GM10248 (cell line): ENCODE measurements at regions of chr1 and their contacts with region 1.

Region 1: DNA sequence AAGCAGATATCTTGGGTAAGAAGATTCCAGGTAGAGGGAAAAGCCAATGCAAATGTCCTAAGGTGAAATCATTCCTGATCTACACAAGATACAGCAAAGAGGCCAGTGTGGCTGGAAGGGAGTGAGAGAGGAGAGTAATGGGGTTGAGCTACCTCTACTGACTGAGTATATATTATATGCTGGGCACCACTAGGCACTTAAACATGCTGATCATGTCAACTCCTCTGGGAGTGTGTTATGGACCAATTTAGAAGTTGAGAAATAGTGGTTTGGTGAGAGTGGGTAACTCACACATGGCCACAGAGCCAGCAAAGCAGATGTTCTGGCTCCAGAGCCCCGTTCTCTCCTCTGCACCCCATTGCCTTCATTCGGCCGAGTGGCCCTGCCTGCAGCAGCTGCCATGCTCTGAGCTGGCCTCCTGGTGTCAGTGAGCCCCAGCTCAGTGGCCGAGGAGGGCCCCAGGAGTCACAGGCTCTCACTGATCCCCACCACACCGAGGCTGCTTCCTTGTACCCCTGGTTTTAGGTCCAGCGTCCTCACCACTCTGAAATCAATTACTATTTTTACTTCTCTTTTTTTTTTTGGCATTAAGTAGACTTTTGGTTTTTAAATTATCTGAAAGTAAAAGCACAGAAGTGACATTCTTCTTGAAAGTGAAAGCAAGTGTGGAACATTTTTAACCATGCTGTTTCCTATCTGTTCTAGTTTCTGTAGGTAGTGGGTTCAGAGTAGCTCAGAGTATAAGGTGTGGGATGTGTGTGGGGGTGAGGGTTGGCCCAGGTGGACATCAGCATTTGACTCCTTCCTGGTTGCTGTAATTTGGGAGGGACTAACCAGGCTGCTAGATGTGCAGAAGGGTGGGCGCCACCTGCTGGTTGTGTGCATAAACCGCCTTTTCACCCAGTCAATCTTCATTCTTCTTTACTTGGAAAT is 45.8 kb upstream of the CRNN start:
- DNase-seq: peak; percentile 81
- CTCF ChIP-seq: peak; percentile 71

Region 2: GRCh38 chr1:152039886-152040285 is 420.0 kb before region 1 on chr1:
- CTCF ChIA-PET with region 1: interaction called, 14 read pairs
- POLR2A ChIA-PET with region 1: no interaction called
- DNase-seq: no peak
- CTCF ChIP-seq: no peak

Region 3: GRCh38 chr1:152182431-152182830 is 277.4 kb before region 1 on chr1:
- CTCF ChIA-PET with region 1: interaction called, 159 read pairs
- POLR2A ChIA-PET with region 1: no interaction called
- DNase-seq: no peak
- CTCF ChIP-seq: peak; percentile 46

Region 4: DNA sequence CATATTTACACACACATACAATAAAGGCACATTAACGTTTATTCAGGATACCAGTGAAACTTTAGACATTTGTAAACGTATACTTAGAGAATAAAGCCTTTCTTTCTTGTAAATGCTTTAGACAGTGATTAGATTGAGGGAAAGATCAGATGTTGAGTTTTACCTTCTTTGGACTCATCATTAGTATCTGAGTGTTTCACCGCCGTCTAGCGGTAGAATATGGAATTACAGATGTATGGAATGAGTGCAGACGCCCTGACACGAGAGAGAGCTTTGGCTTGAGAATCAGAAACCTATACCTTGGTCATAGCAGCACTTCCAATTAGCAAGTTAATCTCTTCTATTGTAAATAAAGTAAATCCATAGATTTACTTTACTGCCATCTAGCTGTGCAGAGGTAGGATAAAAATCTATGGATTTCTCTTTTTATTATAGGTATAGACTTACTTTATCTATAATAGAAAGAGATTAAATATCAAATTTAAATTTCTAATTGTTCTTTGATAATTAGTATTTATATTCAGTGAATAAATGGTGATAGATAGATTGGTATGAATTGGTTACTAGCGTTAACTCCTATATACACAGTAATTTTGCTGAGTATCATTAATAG is 112.6 kb before region 1 on chr1:
- CTCF ChIA-PET with region 1: interaction called, 30 read pairs
- POLR2A ChIA-PET with region 1: no interaction called
- DNase-seq: peak; percentile 22
- CTCF ChIP-seq: peak; percentile 84

Region 5: DNA sequence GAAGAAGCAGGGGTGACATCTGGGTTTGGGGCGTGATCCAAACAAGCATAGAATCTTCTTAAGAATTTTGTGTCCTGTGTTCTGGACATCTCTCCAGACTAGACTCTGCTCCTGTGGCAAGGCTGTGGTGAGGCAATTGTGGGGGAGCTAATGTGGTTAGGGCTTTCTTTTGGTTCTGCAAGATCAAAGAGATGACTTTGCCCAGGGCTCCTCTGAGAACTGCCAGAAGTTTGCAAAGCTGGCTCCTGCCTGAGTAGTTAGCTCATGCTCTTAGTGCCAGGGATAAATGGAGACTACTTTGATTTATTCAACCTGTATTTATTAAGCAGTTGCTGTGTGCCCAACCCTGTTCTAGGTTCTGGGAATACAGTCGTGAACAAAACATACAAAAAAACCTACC is 11.8 kb before region 1 on chr1:
- CTCF ChIA-PET with region 1: interaction called, 70 read pairs
- POLR2A ChIA-PET with region 1: no interaction called
- DNase-seq: no peak
- CTCF ChIP-seq: no peak

Region 6: GRCh38 chr1:152993186-152993585 is 533.3 kb after region 1 on chr1:
- CTCF ChIA-PET with region 1: no interaction called
- POLR2A ChIA-PET with region 1: no interaction called
- DNase-seq: no peak
- CTCF ChIP-seq: no peak